WTC11 (cell line): ENCODE measurements at regions of chr17 and their contacts with region 1.

Region 1: DNA sequence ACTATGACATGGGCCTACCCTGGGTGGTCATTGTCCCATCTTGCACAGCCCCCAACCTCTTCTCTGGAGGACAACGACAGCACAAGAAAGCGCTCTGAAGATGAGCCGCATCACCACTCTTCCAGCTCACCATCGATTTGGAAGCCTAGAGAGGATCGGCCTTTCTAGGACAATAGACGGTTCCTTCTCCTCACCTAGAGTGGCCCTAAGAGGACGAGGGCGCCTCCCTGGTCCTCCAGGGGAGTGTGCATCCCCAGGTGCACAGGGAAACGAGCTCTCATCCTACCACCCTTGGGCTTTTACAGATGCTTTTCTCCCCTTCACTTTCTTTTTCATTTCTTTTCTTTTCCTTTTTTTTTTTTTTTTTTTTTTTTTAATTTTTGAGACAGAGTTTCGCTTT is 20.3 kb upstream of the SLC52A1 start:
- DNase-seq: no peak
- ATAC-seq: peak; percentile 81
- H3K4me3 Mint-ChIP-seq: no peak overlapping the region
- H3K27ac Mint-ChIP-seq: no peak overlapping the region
- H3K4me1 Mint-ChIP-seq: no peaks in the 10 kb centered on the region
- H3K27me3 Mint-ChIP-seq: peaks cover 12% of the 10 kb centered on the region
- CTCF ChIP-seq: no peak

Region 2: DNA sequence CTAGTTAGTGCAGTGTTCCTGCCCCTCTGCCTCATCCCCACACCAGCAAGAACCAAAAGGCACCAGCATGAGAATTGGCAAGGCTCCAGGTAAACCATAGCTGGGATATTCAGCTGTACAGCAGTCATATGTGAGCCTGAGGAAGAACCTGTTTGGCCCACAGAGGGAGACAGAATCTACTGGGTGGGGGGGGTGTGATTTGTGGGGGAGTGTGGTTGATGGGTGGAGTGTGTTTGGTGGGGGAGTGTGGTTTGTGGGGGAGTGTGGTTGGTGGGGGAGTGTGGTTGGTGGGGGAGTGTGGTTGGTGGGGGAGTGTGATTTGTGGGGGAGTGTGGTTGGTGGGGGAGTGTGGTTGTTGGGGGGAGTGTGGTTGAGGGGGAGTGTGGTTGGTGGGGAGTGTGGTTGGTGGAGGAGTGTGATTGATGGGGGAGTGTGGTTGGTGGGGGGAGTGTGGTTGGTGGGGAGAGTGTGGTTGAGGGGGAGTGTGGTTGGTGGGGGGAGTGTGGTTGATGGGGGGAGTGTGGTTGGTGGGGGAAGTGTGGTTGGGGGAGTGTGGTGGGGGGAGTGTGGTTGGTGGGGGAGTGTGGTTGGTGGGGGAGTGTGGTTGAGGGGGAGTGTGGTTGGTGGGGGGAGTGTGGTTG is 202.9 kb before region 1 on chr17:
- CTCF ChIA-PET with region 1: no interaction called
- POLR2A ChIA-PET with region 1: no interaction called
- DNase-seq: no peak
- ATAC-seq: no peak
- H3K4me3 Mint-ChIP-seq: no peak overlapping the region
- H3K27ac Mint-ChIP-seq: peak overlapping the region; percentile 90
- H3K4me1 Mint-ChIP-seq: peaks cover 73% of the 10 kb centered on the region
- H3K27me3 Mint-ChIP-seq: no peaks in the 10 kb centered on the region
- CTCF ChIP-seq: no peak

Region 3: DNA sequence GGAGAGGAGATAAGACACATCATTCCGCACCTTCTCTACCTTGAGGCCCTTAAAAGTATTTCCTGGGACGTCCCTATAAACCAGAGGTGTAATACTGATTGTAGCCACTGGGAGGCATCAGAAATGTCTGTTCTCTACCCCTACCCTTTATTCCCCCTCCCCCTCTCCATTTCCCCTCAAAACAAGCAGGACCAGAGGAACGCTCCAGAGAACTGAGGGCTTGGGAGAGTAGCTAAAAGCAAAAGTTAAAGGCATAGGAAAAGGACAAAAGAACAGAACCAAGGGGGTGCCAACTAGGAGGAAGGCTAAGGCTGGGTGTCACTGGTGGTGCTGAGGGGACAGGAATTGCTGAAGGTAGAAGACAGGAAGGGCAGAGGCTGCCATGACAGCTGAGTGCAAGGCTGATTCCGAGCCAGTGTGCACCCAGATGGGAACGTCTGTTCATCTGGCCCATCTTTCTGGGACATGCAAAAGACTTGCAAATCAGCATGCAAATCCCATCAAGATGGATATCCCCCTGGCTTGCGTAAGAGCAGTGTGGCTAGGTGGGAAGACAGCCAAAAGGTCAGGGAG is 74.8 kb before region 1 on chr17:
- CTCF ChIA-PET with region 1: interaction called, 33 read pairs
- POLR2A ChIA-PET with region 1: no interaction called
- DNase-seq: peak; percentile 31
- ATAC-seq: peak; percentile 91
- H3K4me3 Mint-ChIP-seq: no peak overlapping the region
- H3K27ac Mint-ChIP-seq: no peak overlapping the region
- H3K4me1 Mint-ChIP-seq: peaks cover 5% of the 10 kb centered on the region
- H3K27me3 Mint-ChIP-seq: peaks cover 43% of the 10 kb centered on the region
- CTCF ChIP-seq: peak; percentile 78